Posterior vena cava (tissue), 2 donors: ENCODE measurements at regions of chr7 and their contacts with region 1.

Region 1: DNA sequence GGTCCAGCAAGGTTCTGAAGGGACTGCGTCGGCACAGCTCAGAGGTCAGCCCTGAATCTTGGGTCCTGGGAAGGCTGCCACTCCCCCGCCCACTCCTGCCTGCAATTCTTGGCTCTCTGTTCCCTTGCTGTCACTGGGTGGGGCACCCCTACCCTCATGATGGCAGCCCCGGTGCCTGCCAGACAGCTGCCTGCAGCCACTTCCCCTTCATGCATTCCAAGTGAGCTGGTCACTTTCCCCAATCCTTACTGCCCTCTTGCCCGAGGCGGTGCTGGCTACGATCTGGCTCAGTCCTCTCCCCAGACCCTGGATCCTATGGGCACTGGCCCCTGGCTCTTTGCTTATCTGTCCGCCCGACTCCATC is 14.2 kb downstream of the MYL10 start:
- DNase-seq: no peak

Region 2: GRCh38 chr7:102125127-102125561 is 510.2 kb after region 1 on chr7:
- intact Hi-C with region 1: loop called in 1 of 2 experiments (anchors 10 kb)
- DNase-seq: peak; percentile 91